ENCODE measurements at regions of chr1 and their contacts with region 1.

Region 1: DNA sequence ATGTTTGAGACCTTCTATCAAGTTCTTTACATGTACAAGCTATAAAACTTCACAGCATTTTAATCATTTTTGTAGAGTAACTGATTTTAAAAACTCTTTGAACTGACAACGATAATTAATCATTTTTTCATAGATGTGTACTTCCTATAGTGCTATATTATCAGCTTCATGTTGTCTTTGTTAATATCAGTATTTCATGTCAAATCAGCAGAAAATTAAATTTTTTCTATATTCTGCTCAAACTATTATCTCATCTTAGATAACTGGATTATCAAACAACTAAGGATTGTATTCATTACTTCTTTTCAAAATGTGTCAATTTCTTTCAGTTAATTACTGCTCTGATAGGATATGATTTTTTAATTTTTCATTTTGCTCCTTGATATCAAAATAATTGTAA is 214.6 kb upstream of the RGS18 start:
- DNase-seq: no peak
- ATAC-seq: no peak
- H3K4me3 Mint-ChIP-seq: no peak overlapping the region
- H3K27ac Mint-ChIP-seq: no peak overlapping the region
- H3K4me1 Mint-ChIP-seq: no peaks in the 10 kb centered on the region
- H3K27me3 Mint-ChIP-seq: no peaks in the 10 kb centered on the region

Region 2: GRCh38 chr1:191752351-191752750 is 191.3 kb before region 1 on chr1:
- CTCF ChIA-PET with region 1: no interaction called
- POLR2A ChIA-PET with region 1: no interaction called
- intact Hi-C with region 1: no loop called
- DNase-seq: no peak
- ATAC-seq: no peak
- H3K4me3 Mint-ChIP-seq: no peak overlapping the region
- H3K27ac Mint-ChIP-seq: no peak overlapping the region
- H3K4me1 Mint-ChIP-seq: no peaks in the 10 kb centered on the region
- H3K27me3 Mint-ChIP-seq: no peaks in the 10 kb centered on the region

Region 3: GRCh38 chr1:191888985-191889622 is 54.6 kb before region 1 on chr1:
- CTCF ChIA-PET with region 1: no interaction called
- POLR2A ChIA-PET with region 1: no interaction called
- intact Hi-C with region 1: loop called in 1 of 2 experiments (anchors 10 kb)
- DNase-seq: no peak
- ATAC-seq: no peak
- H3K4me3 Mint-ChIP-seq: no peak overlapping the region
- H3K27ac Mint-ChIP-seq: no peak overlapping the region
- H3K4me1 Mint-ChIP-seq: no peaks in the 10 kb centered on the region
- H3K27me3 Mint-ChIP-seq: no peaks in the 10 kb centered on the region

Measured in activated CD4-positive, alpha-beta T cell treated with anti-CD3 and anti-CD28 coated beads for 36 hours (primary cell).